ENCODE measurements at regions of chr9 and their contacts with region 1.

Region 1: GRCh38 chr9:89929673-89930480 is 325.1 kb downstream of the GADD45G start:
- DNase-seq: peak in 1 of 4 donors; percentile 48
- ATAC-seq: peak; percentile 31
- H3K4me3 ChIP-seq: no peak overlapping the region
- H3K27ac ChIP-seq: no peak overlapping the region
- H3K4me1 ChIP-seq: peaks cover 9 to 10% of the 10 kb centered on the region in 2 donors
- H3K27me3 ChIP-seq: no peaks in the 10 kb centered on the region
- CTCF ChIP-seq: no peak

Region 2: DNA sequence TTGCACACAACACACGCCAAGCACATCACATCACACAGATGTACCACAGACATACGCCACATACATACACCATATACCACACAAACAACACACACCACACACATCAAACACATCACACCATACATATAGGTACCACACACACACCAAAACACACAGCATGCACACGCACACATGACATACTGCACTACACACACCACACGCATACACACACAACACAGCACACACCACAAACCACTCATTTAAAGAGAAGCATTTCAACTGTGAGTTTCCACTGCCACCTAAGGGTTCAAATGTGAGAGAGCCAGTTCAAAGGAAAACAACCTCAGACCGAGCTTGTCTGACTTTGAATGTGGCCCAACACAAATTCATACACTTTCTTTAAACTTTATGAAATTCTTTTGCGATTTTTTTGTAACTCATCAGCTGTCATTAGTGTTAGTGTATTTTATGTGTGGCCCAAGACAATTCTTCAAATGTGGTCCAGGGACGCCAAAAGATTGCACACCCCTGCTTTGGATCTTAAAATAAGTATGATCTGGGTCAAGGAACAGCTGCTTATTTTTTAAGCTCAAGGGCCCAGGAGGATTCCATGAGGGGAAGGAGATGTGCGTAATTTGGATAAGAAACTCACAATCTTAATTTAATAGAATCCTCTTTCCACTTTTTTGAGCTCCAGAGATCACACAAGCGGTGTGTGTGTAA is 169.5 kb after region 1 on chr9:
- intact Hi-C with region 1: loop called in 1 of 2 experiments (anchors 10 kb)
- DNase-seq: peak in 2 of 4 donors; percentile 22 to 41
- ATAC-seq: peak; percentile 56
- H3K4me3 ChIP-seq: no peak overlapping the region
- H3K27ac ChIP-seq: no peak overlapping the region
- H3K4me1 ChIP-seq: peaks cover 0 to 7% of the 10 kb centered on the region in 2 donors
- H3K27me3 ChIP-seq: peaks cover 0 to 6% of the 10 kb centered on the region in 2 donors
- CTCF ChIP-seq: peak in 1 of 2 donors; percentile 41